Activated CD4-positive, alpha-beta T cell treated with anti-CD3 and anti-CD28 coated beads for 36 hours (primary cell): ENCODE measurements at regions of chr11 and their contacts with region 1.

Region 1: DNA sequence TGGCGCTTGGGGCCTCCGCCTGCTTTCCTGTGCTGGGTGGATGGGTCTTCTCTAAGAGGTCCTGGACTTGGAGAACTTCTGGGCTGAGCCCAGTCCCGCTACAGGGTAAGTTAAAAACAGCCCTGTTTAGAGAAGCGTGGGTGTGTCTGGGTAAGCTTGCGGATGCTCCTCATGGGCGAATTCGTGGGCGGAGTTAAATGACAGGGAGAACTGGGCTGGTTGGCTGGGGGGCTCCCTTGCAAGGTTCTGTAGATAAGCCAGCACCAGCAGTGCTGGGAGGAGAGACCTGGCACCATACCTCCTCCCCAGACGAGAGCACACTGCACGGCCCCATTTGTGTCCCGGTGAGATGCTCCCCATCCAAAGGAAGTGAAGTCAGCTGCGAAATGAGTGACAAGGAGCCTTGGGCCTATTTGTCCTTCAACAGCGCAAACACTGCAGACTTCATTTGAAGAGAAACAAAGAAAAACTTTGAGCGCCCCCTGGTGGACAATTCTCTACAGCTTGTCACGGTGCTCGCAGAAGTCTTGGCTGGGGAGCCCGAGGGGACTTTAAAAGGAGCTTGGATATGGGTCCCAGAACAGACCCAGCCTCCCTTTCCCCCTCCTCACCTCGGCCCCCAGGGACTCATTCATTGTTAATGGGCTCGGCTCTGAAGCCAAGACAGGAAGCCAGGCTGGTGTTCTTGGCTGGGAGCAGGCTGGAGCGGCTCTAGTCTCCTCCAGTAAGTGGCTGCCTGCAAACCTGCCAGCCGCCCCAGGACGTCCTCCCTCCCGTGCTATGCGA is 39.5 kb downstream of the TP53I11 start:
- DNase-seq: peak; percentile 93
- ATAC-seq: peak; percentile 91
- H3K4me3 Mint-ChIP-seq: no peak overlapping the region
- H3K27ac Mint-ChIP-seq: no peak overlapping the region
- H3K4me1 Mint-ChIP-seq: peaks cover 3% of the 10 kb centered on the region
- H3K27me3 Mint-ChIP-seq: no peaks in the 10 kb centered on the region

Region 2: GRCh38 chr11:44542372-44542771 is 368.9 kb before region 1 on chr11:
- CTCF ChIA-PET with region 1: no interaction called
- POLR2A ChIA-PET with region 1: no interaction called
- intact Hi-C with region 1: no loop called
- DNase-seq: no peak
- ATAC-seq: no peak
- H3K4me3 Mint-ChIP-seq: no peak overlapping the region
- H3K27ac Mint-ChIP-seq: no peak overlapping the region
- H3K4me1 Mint-ChIP-seq: no peaks in the 10 kb centered on the region
- H3K27me3 Mint-ChIP-seq: no peaks in the 10 kb centered on the region

Region 3: DNA sequence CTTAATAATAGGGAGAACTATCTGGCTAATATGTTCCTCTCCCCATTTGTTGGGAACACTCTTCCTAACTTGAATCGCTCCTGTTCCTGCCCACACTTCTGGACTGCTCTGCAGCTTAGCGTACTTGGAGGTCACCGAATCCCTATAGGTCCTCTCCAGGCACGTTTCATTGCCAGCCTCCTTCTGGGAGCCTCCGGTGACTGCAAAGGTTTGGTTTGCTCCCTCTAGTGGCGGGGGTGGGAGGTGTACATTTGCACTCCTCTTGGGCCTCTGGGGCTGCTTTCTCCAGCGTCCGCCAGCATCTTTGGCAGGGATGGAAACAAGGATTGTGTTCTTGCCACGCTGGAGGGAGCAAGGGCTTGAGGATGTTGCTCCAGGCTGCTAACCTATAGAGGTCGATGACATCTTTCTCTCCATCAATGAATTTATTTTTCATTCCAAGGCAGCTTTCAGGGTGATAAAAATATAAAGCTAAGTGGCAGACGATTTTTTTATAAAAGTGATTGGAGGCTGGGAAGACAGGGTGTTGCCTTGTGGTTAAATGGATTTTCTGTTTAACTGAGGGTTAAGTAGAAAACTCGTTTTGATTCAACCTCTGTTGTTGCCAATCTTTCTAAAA is 135.7 kb before region 1 on chr11:
- CTCF ChIA-PET with region 1: interaction called, 9 read pairs
- POLR2A ChIA-PET with region 1: no interaction called
- intact Hi-C with region 1: loop called in 1 of 2 experiments (anchors 5 kb)
- DNase-seq: peak; percentile 72
- ATAC-seq: peak; percentile 64
- H3K4me3 Mint-ChIP-seq: no peak overlapping the region
- H3K27ac Mint-ChIP-seq: no peak overlapping the region
- H3K4me1 Mint-ChIP-seq: peaks cover 5% of the 10 kb centered on the region
- H3K27me3 Mint-ChIP-seq: no peaks in the 10 kb centered on the region

Region 4: GRCh38 chr11:44785856-44786606 is 125.2 kb before region 1 on chr11:
- CTCF ChIA-PET with region 1: interaction called, 5 read pairs
- POLR2A ChIA-PET with region 1: no interaction called
- intact Hi-C with region 1: loop called in 1 of 2 experiments (anchors 5 kb)
- DNase-seq: peak; percentile 21
- ATAC-seq: no peak
- H3K4me3 Mint-ChIP-seq: no peak overlapping the region
- H3K27ac Mint-ChIP-seq: no peak overlapping the region
- H3K4me1 Mint-ChIP-seq: no peaks in the 10 kb centered on the region
- H3K27me3 Mint-ChIP-seq: no peaks in the 10 kb centered on the region